Aorta (tissue), 5 donors: ENCODE measurements at regions of chr4 and their contacts with region 1.

Region 1: GRCh38 chr4:107757864-107758476 is 37.9 kb upstream of the PAPSS1 start:
- DNase-seq: no peak
- ATAC-seq: no peak
- H3K4me3 ChIP-seq: no peak overlapping the region
- H3K27ac ChIP-seq: no peak overlapping the region
- H3K4me1 ChIP-seq: no peaks in the 10 kb centered on the region
- H3K27me3 ChIP-seq: peaks cover 0 to 2% of the 10 kb centered on the region in 2 donors

Region 2: GRCh38 chr4:107404591-107405300 is 353.2 kb before region 1 on chr4:
- intact Hi-C with region 1: no loop called
- DNase-seq: no peak
- ATAC-seq: no peak
- H3K4me3 ChIP-seq: no peak overlapping the region
- H3K27ac ChIP-seq: no peak overlapping the region
- H3K4me1 ChIP-seq: no peaks in the 10 kb centered on the region
- H3K27me3 ChIP-seq: no peaks in the 10 kb centered on the region

Region 3: DNA sequence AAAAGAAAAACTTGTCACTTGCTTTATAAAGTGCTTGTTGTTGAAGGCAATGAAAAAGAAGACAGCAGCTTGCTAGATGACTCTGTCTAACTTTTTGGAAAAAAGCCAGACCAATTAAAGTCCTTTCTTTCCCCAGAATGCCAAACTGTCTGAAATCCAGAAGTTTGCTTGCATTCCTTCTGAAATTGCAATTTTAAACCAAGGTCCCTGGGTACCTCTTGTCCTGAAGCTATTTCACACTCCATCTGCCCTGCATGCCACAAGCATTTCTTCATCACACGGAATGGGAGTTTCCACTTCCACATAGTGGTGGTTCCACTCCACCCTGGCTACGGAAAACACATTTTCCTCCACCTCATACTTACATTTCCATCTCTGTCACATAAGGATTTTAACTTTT is 138.9 kb before region 1 on chr4:
- intact Hi-C with region 1: no loop called
- DNase-seq: no peak
- ATAC-seq: peak; percentile 74
- H3K4me3 ChIP-seq: no peak overlapping the region
- H3K27ac ChIP-seq: peak overlapping the region in 1 of 2 donors; percentile 17
- H3K4me1 ChIP-seq: peaks cover 2 to 4% of the 10 kb centered on the region in 2 donors
- H3K27me3 ChIP-seq: no peaks in the 10 kb centered on the region

Region 4: GRCh38 chr4:107725281-107725859 is 32.6 kb before region 1 on chr4:
- intact Hi-C with region 1: no loop called
- DNase-seq: no peak
- ATAC-seq: no peak
- H3K4me3 ChIP-seq: no peak overlapping the region
- H3K27ac ChIP-seq: no peak overlapping the region
- H3K4me1 ChIP-seq: no peaks in the 10 kb centered on the region
- H3K27me3 ChIP-seq: no peaks in the 10 kb centered on the region

Region 5: GRCh38 chr4:107913281-107913899 is 155.4 kb after region 1 on chr4:
- intact Hi-C with region 1: loop called (anchors 1 to 2 kb)
- DNase-seq: no peak
- ATAC-seq: peak; percentile 87
- H3K4me3 ChIP-seq: no peak overlapping the region
- H3K27ac ChIP-seq: no peak overlapping the region
- H3K4me1 ChIP-seq: no peaks in the 10 kb centered on the region
- H3K27me3 ChIP-seq: no peaks in the 10 kb centered on the region

Region 6: DNA sequence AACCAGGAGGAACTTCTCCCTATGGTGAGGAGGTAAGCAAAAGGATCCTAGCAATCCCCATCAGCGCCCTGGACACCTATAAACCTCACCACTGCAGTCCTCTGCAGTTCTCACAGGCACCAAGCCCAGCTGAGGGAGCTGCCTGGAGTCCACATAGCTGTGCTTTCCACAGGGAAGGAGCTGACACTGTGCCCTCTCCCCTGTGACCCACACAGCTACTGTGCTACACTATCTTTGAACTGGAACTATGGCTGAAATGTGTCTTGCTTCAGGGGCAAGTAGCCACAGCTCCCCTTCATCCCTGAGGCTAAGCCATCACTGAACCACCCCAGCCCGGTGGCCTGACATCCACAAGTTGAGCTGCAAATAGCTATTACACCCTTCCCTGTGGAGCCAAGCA is 653.9 kb after region 1 on chr4:
- intact Hi-C with region 1: no loop called
- DNase-seq: no peak
- ATAC-seq: no peak
- H3K4me3 ChIP-seq: no peak overlapping the region
- H3K27ac ChIP-seq: no peak overlapping the region
- H3K4me1 ChIP-seq: no peaks in the 10 kb centered on the region
- H3K27me3 ChIP-seq: no peaks in the 10 kb centered on the region